Posterior vena cava (tissue), 2 donors: ENCODE measurements at regions of chr3 and their contacts with region 1.

Region 1: GRCh38 chr3:147572970-147573340 is 163.8 kb downstream of the ZIC1 start:
- DNase-seq: no peak

Region 2: GRCh38 chr3:146454796-146455195 is 1118.2 kb before region 1 on chr3:
- intact Hi-C with region 1: loop called in 1 of 2 experiments (anchors 5 kb)
- DNase-seq: no peak

Region 3: GRCh38 chr3:147521646-147522045 is 51.3 kb before region 1 on chr3:
- intact Hi-C with region 1: no loop called
- DNase-seq: no peak